ENCODE measurements at regions of chr2 and their contacts with region 1.

Region 1: GRCh38 chr2:225668606-225669266 is 269.2 kb downstream of the NYAP2 start:
- DNase-seq: peak; percentile 82
- ATAC-seq: peak; percentile 90
- H3K4me3 ChIP-seq: no peak overlapping the region
- H3K27ac ChIP-seq: peak overlapping the region; percentile 17; the same call in 1 of the 2 replicates
- H3K4me1 ChIP-seq: peaks cover 16% of the 10 kb centered on the region
- H3K27me3 ChIP-seq: no peaks in the 10 kb centered on the region
- CTCF ChIP-seq: peak; percentile 93

Region 2: DNA sequence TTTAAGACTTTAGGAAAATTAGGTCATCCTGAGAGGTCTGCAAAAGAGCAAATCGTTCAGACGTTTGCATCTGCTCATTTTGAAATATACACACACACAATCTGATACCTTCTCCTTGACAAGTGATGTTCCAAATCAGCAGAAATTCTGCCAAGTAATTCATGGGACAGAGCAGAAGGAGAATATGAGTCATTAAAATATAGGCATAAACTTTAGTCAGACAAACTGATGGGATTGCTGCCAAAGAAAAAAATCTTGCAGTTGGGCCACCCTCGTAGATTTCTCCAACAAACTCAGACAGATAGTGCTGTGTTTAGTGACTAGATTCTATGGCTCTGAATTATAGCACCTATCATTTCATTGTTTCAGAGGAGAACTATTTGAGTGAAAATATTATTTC is 67.1 kb after region 1 on chr2:
- CTCF ChIA-PET with region 1: no interaction called
- POLR2A ChIA-PET with region 1: no interaction called
- intact Hi-C with region 1: loop called (anchors 1 kb)
- DNase-seq: peak; percentile 95
- ATAC-seq: peak; percentile 48
- H3K4me3 ChIP-seq: no peak overlapping the region
- H3K27ac ChIP-seq: peak overlapping the region; percentile 81
- H3K4me1 ChIP-seq: peaks cover 34% of the 10 kb centered on the region
- H3K27me3 ChIP-seq: no peaks in the 10 kb centered on the region
- CTCF ChIP-seq: no peak

Region 3: DNA sequence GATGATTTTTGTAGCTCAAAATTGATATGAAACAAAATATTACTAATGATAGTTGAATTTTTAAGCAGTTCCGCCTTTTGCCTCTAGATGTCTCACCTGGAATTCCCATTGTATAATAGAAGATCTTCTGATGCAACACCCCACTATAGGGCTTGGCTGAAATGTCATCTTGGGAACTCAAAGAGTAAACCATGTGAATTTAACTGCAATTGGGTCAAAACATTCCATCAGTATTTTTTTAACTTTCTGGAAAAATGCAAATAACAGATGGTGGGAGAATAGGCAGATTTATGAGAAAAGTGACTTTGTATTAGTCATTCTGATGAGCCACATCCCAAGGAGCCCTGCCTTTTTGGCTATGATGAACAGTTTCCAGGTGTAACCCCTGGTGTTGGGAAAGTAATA is 220.7 kb after region 1 on chr2:
- CTCF ChIA-PET with region 1: no interaction called
- POLR2A ChIA-PET with region 1: no interaction called
- intact Hi-C with region 1: loop called (anchors 1 kb)
- DNase-seq: peak; percentile 75
- ATAC-seq: peak; percentile 94
- H3K4me3 ChIP-seq: no peak overlapping the region
- H3K27ac ChIP-seq: peak overlapping the region; percentile 66
- H3K4me1 ChIP-seq: peaks cover 23% of the 10 kb centered on the region
- H3K27me3 ChIP-seq: no peaks in the 10 kb centered on the region
- CTCF ChIP-seq: peak; percentile 84

Region 4: GRCh38 chr2:226185616-226186211 is 517.0 kb after region 1 on chr2:
- CTCF ChIA-PET with region 1: no interaction called
- POLR2A ChIA-PET with region 1: no interaction called
- intact Hi-C with region 1: loop called (anchors 2 kb)
- DNase-seq: peak; percentile 92
- ATAC-seq: peak; percentile 83
- H3K4me3 ChIP-seq: peak overlapping the region; percentile 57
- H3K27ac ChIP-seq: peak overlapping the region; percentile 95
- H3K4me1 ChIP-seq: peaks cover 46% of the 10 kb centered on the region
- H3K27me3 ChIP-seq: no peaks in the 10 kb centered on the region
- CTCF ChIP-seq: no peak

Region 5: DNA sequence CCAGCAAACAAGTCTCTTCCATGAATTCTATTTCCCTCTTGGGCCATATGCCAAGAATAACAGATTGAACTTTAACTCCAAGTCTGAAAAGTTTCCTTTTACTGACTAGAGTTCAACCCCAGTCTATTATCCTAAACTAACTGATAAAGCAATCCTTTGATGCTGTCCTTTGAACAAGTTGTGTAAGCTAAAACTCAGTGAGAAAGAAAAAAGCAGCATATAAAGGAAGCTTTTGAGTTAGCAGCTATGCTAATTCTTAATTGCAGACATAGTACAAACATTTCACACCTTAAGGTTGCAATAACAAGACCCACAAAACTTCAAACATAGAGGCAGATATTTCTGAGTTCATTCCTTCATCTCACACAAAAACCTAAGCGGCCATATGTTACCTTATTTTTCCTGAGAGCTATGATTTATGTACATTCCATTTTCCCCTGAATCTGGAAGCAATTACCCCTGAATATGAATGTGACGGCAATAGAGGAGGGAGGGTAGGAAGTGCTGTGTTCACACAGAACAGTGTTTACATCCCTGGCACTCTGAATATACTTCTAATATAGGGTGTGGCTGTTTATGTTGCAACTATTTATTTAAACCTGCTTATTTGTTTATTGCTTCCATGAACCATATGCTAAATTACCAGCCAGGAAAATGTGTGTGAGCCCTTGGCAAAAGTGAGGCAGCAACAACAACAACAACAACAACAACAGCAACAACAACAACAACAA is 950.3 kb after region 1 on chr2:
- CTCF ChIA-PET with region 1: interaction called, 3 read pairs
- POLR2A ChIA-PET with region 1: no interaction called
- intact Hi-C with region 1: loop called (anchors 10 kb)
- DNase-seq: no peak
- ATAC-seq: no peak
- H3K4me3 ChIP-seq: no peak overlapping the region
- H3K27ac ChIP-seq: no peak overlapping the region
- H3K4me1 ChIP-seq: peaks cover 10% of the 10 kb centered on the region
- H3K27me3 ChIP-seq: no peaks in the 10 kb centered on the region
- CTCF ChIP-seq: no peak

Region 6: DNA sequence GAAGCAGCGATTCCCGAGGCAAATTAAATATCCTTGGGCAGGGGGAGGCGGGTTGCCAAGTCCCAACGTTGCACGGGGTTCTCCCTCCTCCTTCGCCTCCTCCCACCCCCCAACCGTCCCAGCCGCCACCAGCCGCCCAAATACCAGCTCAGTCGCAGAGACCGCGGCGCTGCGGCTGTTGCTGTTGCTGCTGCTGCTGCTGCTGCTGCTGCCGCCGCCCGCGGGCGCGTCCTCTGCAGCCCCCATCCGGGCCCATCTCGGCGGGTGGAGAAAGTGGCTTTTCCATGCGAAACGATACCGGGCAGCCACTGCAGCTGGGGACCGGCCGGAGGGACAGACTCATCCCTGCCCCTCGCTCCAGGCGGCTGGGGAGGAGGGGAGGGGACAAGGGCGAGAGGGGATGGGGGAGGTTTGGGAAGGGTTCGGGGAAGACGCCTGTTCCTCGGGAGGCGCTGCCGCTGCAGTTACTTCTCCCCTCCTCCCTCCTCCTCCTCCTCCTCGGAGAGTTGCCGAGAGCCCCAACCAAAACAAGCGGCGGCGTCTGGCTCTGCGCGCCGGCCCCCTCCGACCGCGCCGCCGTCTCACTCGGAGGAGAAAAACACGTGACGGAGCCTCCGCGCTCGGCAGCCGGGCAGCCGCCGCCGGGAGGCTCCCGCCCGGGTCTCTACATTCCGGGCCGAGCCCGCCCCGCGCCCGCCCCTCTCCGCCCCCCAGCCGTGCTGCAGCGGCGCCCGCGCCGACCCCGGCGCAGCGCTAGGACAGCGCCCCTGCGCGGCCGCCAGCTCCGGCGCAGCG is 1130.6 kb after region 1 on chr2 and contains the start of gene IRS1:
- CTCF ChIA-PET with region 1: interaction called, 30 read pairs
- POLR2A ChIA-PET with region 1: interaction called, 7 read pairs
- intact Hi-C with region 1: loop called (anchors 1 kb)
- DNase-seq: peak; percentile 75
- ATAC-seq: peak; percentile 13
- H3K4me3 ChIP-seq: peak within 1 kb of the TSS; percentile 88
- H3K27ac ChIP-seq: peak within 1 kb of the TSS; percentile 88
- H3K4me1 ChIP-seq: peaks cover 36% of the 10 kb centered on the region
- H3K27me3 ChIP-seq: no peaks in the 10 kb centered on the region
- CTCF ChIP-seq: no peak
- total RNA-seq, gene IRS1: 38.8 and 43.8 TPM in 2 replicates

Measured in PC-3 (cell line).